GM18951 (cell line): ENCODE measurements at regions of chrX and their contacts with region 1.

Region 1: GRCh38 chrX:103941201-103941975 is 21.0 kb upstream of the TMSB15B start:
- POLR2A ChIP-seq: no peak

Region 2: DNA sequence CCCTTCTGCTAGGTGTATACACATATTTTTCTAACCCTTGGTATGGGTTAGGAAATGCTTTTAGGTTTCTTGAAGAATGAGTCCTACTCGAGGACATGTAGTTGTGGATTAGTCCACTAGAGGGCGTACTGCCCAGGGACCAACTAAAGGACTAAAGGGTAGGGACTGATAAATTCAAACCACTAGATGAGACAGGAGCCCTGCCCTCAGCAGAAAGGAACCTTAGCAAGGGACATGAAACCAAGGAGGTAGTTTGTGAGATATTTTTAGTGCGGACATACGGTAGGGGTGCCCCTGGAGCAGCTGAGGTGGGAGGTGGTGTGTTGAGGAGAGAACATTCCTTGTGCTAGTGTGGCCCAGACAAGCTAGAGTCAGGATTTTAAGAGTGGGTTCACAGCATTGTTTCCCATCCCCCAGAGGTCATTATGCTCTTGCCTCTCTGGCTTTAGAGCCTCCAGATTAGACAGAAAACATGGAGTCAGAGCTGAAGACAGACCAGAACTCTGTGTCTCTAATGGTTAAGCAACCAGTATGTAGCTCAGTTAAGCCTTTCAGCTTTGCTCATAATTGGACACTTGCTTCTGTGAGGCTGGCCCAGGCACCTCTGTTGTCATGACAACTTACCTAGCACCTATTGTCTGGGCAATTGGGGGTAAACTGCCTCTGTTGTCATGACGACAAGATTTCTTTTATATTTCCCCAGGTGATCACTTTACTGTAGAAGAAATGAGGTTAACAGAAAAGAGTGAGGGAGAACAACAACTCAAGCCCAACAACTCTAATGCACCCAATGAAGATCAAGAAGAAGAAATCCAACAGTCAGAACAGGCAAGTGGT is 229.6 kb before region 1 on chrX:
- in situ Hi-C with region 1: no loop called
- POLR2A ChIP-seq: no peak

Region 3: DNA sequence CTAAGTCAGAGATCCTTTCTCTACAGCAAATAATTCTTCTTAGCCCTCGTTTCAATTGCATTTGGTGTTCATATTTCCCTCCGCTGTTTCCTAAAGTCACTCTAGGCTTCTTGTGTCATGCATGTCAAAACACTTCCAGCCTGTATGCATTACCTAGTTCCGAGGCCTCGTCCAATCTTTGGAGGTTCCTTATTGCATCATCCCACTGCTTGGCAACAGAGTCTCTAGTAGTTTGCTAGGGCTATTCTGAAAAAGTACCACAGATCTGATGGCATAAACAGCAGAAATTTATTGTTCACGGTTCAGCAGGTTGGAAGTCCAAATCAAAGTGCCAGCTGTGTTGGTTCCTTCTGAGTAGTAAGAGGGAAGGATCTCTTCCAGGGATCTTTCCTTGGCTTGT is 104.3 kb after region 1 on chrX:
- in situ Hi-C with region 1: loop called (anchors 25 kb)
- POLR2A ChIP-seq: no peak

Region 4: GRCh38 chrX:104165894-104166737 is 224.7 kb after region 1 on chrX and contains the start of gene FAM199X:
- in situ Hi-C with region 1: no loop called
- POLR2A ChIP-seq: peak; percentile 62

Region 5: GRCh38 chrX:104459796-104460195 is 518.4 kb after region 1 on chrX:
- in situ Hi-C with region 1: no loop called
- POLR2A ChIP-seq: no peak